IMR-90 (cell line): ENCODE measurements at regions of chr3 and their contacts with region 1.

Region 1: GRCh38 chr3:79019137-79019923 is 748.5 kb downstream of the ROBO1 start:
- DNase-seq: peak; percentile 93
- ATAC-seq: peak; percentile 83
- H3K4me3 ChIP-seq: peak overlapping the region; percentile 65
- H3K27ac ChIP-seq: peak overlapping the region; percentile 97
- H3K4me1 ChIP-seq: peaks cover 1% of the 10 kb centered on the region; the same call in 1 of the 2 replicates
- H3K27me3 ChIP-seq: no peaks in the 10 kb centered on the region
- CTCF ChIP-seq: no peak
- POLR2A ChIP-seq: peak; percentile 94
- RAD21 ChIP-seq: 0 out of 2 replicates have a peak, but pooled peaks have one; percentile 10

Region 2: GRCh38 chr3:78951339-78951945 is 67.9 kb before region 1 on chr3:
- CTCF ChIA-PET with region 1: no interaction called
- POLR2A ChIA-PET with region 1: no interaction called
- dilution Hi-C with region 1: no loop called
- in situ Hi-C with region 1: no loop called
- intact Hi-C with region 1: loop called (anchors 5 kb)
- DNase-seq: peak; percentile 84
- ATAC-seq: peak; percentile 99
- H3K4me3 ChIP-seq: no peak overlapping the region
- H3K27ac ChIP-seq: no peak overlapping the region
- H3K4me1 ChIP-seq: peaks cover 2% of the 10 kb centered on the region; the same call in 1 of the 2 replicates
- H3K27me3 ChIP-seq: no peaks in the 10 kb centered on the region
- CTCF ChIP-seq: no peak
- POLR2A ChIP-seq: no peak
- RAD21 ChIP-seq: no peak